IMR-90 (cell line): ENCODE measurements at regions of chr2 and their contacts with region 1.

Region 1: DNA sequence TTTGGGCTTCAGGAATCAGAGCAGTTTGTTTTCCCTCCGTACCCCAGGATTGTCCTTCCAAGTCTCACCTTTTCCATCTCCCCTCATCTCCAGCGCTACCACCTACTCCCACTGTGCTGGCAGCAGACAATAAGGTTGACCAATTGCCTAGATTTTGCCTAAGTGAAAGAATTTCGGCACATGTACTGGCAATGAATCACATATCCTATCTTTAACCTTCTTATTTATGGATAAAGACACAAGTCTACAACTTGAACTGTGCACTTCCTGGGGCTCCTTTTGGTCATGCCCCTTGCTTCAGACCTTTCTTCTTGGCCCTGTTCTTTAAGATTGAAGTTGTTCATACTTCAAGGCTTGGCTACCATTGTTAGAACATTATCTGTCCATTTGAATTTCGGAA is 71.4 kb downstream of the KCMF1 start:
- DNase-seq: no peak
- ATAC-seq: peak; percentile 62
- H3K4me3 ChIP-seq: no peak overlapping the region
- H3K27ac ChIP-seq: no peak overlapping the region
- H3K4me1 ChIP-seq: peaks cover 4% of the 10 kb centered on the region
- H3K27me3 ChIP-seq: no peaks in the 10 kb centered on the region
- CTCF ChIP-seq: no peak
- POLR2A ChIP-seq: no peak
- RAD21 ChIP-seq: no peak

Region 2: GRCh38 chr2:84954329-84954728 is 88.0 kb before region 1 on chr2:
- CTCF ChIA-PET with region 1: no interaction called
- POLR2A ChIA-PET with region 1: interaction called, 10 read pairs
- dilution Hi-C with region 1: no loop called
- in situ Hi-C with region 1: no loop called
- intact Hi-C with region 1: no loop called
- DNase-seq: no peak
- ATAC-seq: no peak
- H3K4me3 ChIP-seq: no peak overlapping the region
- H3K27ac ChIP-seq: no peak overlapping the region
- H3K4me1 ChIP-seq: peaks cover 10% of the 10 kb centered on the region
- H3K27me3 ChIP-seq: no peaks in the 10 kb centered on the region
- CTCF ChIP-seq: no peak
- POLR2A ChIP-seq: no peak
- RAD21 ChIP-seq: no peak

Region 3: DNA sequence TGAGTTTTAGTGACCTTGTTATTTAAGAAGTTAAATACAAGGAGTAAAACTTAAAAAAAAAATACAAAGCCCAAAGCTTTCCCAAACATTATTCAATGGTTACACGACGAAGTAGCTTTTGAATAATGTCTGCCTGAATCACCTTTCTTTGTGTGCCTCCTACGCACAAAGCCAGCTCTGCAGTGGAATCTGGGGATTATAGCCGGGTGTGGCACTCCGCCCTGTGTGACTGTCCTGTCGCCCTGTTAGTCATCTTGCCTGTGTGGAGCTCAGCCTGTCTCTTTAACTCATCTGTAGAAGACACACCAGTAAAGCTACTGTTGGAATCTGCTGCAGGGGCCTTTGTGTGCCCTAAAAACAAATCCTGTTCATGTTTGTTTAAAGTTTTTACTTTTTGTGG is 11.5 kb after region 1 on chr2:
- CTCF ChIA-PET with region 1: interaction called, 3 read pairs
- POLR2A ChIA-PET with region 1: interaction called, 19 read pairs
- dilution Hi-C with region 1: no loop called
- in situ Hi-C with region 1: no loop called
- intact Hi-C with region 1: no loop called
- DNase-seq: peak; percentile 54
- ATAC-seq: peak; percentile 48
- H3K4me3 ChIP-seq: no peak overlapping the region
- H3K27ac ChIP-seq: no peak overlapping the region
- H3K4me1 ChIP-seq: peaks cover 6% of the 10 kb centered on the region
- H3K27me3 ChIP-seq: no peaks in the 10 kb centered on the region
- CTCF ChIP-seq: no peak
- POLR2A ChIP-seq: no peak
- RAD21 ChIP-seq: no peak

Region 4: GRCh38 chr2:85230679-85231467 is 188.5 kb after region 1 on chr2:
- CTCF ChIA-PET with region 1: no interaction called
- POLR2A ChIA-PET with region 1: no interaction called
- dilution Hi-C with region 1: no loop called
- in situ Hi-C with region 1: no loop called
- intact Hi-C with region 1: no loop called
- DNase-seq: no peak
- ATAC-seq: no peak
- H3K4me3 ChIP-seq: no peak overlapping the region
- H3K27ac ChIP-seq: no peak overlapping the region
- H3K4me1 ChIP-seq: no peaks in the 10 kb centered on the region
- H3K27me3 ChIP-seq: no peaks in the 10 kb centered on the region
- CTCF ChIP-seq: no peak
- POLR2A ChIP-seq: no peak
- RAD21 ChIP-seq: no peak